HEK293 (cell line): ENCODE measurements at regions of chr19 and their contacts with region 1.

Region 1: DNA sequence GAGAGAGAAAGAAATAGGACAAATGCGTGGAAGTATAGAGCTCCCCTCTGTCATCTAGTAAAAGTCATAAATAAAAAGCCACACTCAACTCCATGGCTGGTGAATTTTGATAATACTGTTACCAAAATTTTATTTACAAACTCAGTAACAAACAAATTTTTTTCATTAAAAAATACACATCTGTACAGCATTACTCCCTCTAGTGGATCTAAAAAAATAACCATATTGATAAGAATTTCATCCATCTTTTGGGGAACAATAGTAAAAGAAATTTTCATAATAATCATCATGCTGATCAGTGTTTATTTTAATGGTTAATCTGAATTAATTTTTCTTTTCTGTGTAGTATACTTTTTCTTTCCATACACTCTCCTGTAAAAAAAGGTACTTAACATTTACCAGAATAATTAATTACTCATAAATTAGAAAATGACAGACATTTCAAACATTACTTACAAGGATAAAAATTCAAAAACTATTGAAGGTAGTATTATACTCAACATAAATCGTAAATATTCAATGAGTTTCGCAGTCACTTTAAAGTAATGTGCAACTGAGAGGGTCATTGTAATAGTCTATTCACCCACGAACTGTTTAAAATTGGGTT is 173.5 kb upstream of the LSM14A start:
- H3K4me3 ChIP-seq: no peak overlapping the region
- H3K27ac ChIP-seq: no peak overlapping the region
- H3K4me1 ChIP-seq: 0 out of 2 replicates have a peak, but pooled peaks cover 4% of the 10 kb centered on the region
- CTCF ChIP-seq: peak; percentile 60

Region 2: DNA sequence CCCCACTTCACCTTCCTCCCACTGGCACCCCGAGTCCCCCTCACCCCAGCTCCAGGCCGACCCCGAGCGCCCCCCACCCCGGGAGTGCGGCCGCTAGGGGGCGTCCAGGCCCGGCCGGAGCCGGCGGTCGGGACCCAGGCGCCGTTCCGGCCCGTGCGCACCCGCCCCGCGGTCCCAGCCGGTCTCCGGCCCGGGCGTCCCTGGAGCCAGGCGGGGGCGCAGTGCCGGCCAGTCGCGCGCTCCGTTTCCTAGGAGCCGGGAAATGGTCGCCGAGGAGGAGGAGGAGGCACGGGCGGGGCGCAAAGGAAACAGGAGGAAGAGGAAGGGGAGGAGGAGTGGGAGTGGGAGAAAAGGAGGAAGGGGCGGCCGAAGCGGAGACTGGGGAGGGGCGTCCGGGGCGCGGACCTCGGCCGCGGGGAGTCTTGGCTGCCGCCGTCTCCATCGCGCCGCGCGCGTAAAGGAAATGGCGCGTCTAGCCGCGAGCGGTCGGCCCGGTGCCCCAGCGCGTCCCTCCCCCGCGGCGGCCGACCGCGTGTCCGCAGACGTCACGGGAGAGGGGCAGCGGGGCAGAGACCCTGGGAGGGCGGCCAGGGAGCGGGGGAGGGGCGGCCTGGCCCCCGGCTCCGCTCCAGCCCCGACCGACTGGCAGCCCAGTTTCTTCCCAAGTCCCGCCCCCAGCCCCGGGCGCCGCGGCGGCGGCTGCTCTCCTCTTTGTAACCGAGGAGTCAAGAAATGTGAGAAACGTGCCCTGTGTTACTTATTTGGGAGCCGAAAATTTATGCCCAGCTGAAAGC is 203.3 kb before region 1 on chr19:
- CTCF ChIA-PET with region 1: interaction called, 10 read pairs
- POLR2A ChIA-PET with region 1: interaction called, 4 read pairs
- H3K4me3 ChIP-seq: peak overlapping the region; percentile 63
- H3K27ac ChIP-seq: peak overlapping the region; percentile 100
- H3K4me1 ChIP-seq: peaks cover 18% of the 10 kb centered on the region
- CTCF ChIP-seq: peak; percentile 99

Region 3: GRCh38 chr19:33971073-33971472 is 27.8 kb before region 1 on chr19:
- CTCF ChIA-PET with region 1: interaction called, 12 read pairs
- POLR2A ChIA-PET with region 1: no interaction called
- H3K4me3 ChIP-seq: no peak overlapping the region
- H3K27ac ChIP-seq: no peak overlapping the region
- H3K4me1 ChIP-seq: no peaks in the 10 kb centered on the region
- CTCF ChIP-seq: no peak

Region 4: DNA sequence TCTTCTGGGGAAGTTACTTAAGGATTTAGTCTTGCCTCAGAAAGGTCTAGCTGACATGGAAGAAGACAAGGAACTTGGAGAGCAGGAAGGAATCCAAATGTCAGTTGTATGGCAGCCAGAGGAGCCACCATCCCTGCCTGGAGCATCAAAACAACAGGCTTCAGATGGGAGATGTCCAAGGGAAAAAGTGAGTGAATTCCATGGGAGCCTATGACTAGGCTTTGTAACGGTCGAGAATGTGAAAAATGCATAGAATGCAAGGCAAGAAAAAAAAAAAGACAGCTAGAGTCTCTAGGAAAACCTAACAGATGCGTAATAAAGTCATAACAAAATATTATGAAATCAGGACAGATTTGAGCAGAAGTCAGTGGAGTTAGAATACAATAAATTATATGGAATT is 10.3 kb before region 1 on chr19:
- CTCF ChIA-PET with region 1: interaction called, 20 read pairs
- POLR2A ChIA-PET with region 1: no interaction called
- H3K4me3 ChIP-seq: no peak overlapping the region
- H3K27ac ChIP-seq: no peak overlapping the region
- H3K4me1 ChIP-seq: no peaks in the 10 kb centered on the region
- CTCF ChIP-seq: no peak

Region 5: GRCh38 chr19:34041925-34042521 is 43.2 kb after region 1 on chr19:
- CTCF ChIA-PET with region 1: interaction called, 12 read pairs
- POLR2A ChIA-PET with region 1: no interaction called
- H3K4me3 ChIP-seq: no peak overlapping the region
- H3K27ac ChIP-seq: no peak overlapping the region
- H3K4me1 ChIP-seq: no peaks in the 10 kb centered on the region
- CTCF ChIP-seq: peak; percentile 70; the same call in 1 of the 2 replicates